Cardiac septum (tissue), 1 donor: ENCODE measurements at regions of chr12 and their contacts with region 1.

Region 1: GRCh38 chr12:10562306-10562933 is 51.0 kb downstream of the MAGOHB start:
- DNase-seq: no peak

Region 2: DNA sequence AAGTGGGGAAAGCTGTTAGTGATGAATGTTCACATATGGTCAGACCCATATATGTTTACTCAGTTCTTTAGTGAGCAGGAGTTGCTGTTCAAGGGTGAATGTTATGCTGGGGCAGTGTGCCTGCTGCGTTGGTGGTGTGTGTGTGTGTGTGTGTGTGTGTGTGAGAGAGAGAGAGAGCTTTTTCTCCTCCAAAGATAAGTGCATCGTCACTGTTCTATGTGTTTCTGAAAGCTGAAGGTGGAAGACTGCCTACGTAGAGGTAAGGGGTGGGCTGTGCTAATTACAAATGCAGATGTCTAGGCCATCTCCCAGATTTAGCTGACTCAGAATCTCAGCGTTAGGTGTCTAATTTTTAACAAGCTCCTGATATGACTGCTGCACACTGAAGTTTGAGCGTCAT is 339.2 kb before region 1 on chr12:
- intact Hi-C with region 1: no loop called
- DNase-seq: no peak

Region 3: DNA sequence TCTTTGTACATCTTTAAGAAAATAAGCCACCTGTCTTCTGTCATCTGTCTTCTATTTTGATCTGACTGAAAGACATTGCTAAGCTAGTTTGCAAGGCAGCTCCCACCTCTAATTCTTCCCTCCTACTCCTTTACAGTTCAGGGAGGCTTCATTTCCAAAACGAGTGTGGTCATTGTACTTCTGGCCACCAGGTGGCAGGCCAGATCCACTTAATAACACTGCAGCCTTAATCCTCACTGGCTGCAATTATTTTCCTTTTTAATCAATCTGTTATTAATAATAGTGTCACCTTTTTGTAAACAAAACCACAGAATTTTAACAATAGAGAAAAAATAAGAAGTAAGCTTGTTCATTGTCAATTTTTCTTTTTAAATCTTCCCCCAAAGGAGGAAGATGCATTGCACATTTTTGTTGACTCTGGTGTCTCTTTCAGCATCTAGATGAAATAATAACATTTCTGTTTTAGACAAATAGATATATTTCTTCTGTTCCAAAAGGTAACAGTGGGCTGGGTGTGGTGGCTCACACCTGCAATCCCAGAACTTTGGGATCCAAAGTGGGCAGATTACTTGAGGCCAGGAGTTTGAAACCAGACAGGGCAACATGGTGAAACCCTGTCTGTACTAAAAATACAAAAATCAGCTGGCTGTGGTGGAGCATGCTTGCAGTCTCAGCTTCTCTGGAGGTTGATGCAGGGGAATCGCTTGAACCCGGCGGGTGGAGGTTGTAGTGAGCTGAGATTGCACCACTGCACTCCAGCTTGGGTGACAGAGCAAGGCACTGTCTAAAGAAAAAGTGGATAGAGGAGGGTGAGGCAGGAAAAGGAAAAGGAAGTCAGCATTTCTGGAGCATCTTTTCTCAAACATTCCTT is 326.4 kb before region 1 on chr12:
- intact Hi-C with region 1: loop called (anchors 2 kb)
- DNase-seq: no peak

Region 4: GRCh38 chr12:10331642-10332239 is 230.7 kb before region 1 on chr12:
- intact Hi-C with region 1: loop called (anchors 2 kb)
- DNase-seq: no peak

Region 5: GRCh38 chr12:10453144-10453543 is 109.3 kb before region 1 on chr12 and contains the start of gene KLRC1:
- intact Hi-C with region 1: no loop called
- DNase-seq: no peak
- total RNA-seq, gene KLRC1: 0.16 TPM

Region 6: GRCh38 chr12:10521555-10521954 is 40.9 kb before region 1 on chr12:
- intact Hi-C with region 1: no loop called
- DNase-seq: no peak